ENCODE measurements at regions of chr3 and their contacts with region 1.

Region 1: GRCh38 chr3:139718415-139718814 is 40.6 kb upstream of the NMNAT3 start:
- DNase-seq: peak; percentile 57
- H3K4me3 Mint-ChIP-seq: no peak overlapping the region
- H3K27ac Mint-ChIP-seq: no peak overlapping the region
- H3K4me1 Mint-ChIP-seq: no peaks in the 10 kb centered on the region
- H3K27me3 Mint-ChIP-seq: peaks cover 80% of the 10 kb centered on the region
- CTCF ChIP-seq: peak; percentile 62

Region 2: DNA sequence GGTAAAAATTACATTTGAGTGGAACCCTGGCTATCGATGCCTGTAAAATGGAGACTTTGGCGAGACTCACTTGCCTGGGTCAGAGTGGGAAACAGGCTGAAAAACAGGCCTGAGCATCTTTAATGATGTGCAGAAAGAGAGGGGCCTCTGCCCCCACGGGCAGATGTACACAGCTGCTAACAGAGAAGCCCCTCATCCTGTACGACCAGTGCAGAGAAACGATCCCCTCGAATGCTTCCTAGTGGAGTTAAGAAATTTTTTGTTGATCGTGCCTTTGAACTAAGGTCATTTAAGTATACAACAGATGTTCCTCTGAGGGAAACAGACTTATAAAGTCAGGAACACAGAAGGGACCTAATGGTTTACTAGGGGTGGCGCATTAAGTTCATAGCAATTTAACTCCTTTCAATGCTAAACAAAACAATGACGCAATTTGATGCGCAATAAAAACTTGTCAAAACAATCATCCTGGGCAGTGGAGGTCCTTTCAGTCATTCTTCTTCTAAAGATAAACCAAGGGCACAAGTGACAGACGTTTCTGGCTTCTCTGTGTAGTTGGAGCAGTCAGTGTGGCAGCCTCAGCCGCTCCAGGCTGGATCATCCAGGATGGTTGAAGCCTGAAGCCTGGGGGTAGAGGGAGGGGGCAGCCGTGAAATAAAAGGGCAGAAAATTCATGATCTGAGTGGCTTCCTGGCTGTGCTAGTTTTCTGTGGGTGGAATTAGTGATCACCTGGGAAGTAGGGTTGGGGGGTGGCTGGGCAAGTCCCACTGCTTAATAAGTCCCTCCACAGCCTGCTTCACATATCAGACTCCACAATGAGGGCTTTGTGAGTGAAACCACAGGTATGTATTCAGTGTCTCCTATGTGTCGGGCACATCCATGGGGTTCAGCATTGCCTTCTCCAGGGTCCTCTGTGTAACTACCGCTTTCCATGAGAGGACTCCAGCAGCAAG is 425.4 kb before region 1 on chr3:
- CTCF ChIA-PET with region 1: no interaction called
- intact Hi-C with region 1: no loop called
- DNase-seq: peak; percentile 57
- H3K4me3 Mint-ChIP-seq: no peak overlapping the region
- H3K27ac Mint-ChIP-seq: peak overlapping the region; percentile 39
- H3K4me1 Mint-ChIP-seq: peaks cover 32% of the 10 kb centered on the region
- H3K27me3 Mint-ChIP-seq: no peaks in the 10 kb centered on the region
- CTCF ChIP-seq: no peak

Region 3: DNA sequence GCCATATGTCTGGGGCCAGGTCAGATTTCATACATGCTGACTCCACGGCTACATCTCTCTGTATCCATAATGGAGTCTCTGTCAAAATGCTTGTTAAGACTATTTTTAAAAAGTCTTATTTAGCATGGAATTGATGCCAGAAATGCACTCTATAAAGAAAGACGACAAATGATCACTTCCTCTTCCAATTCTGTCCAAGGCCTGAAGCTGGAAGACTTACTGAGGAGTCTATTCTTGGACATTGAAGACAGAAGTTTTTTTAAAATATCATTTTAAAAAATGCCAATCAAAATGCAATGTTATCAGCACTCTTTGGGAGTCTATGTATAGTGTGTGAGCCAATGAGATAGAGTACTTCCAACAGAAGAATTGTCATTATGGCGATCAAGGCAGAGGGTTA is 12.8 kb before region 1 on chr3:
- CTCF ChIA-PET with region 1: no interaction called
- intact Hi-C with region 1: no loop called
- DNase-seq: no peak
- H3K4me3 Mint-ChIP-seq: no peak overlapping the region
- H3K27ac Mint-ChIP-seq: no peak overlapping the region
- H3K4me1 Mint-ChIP-seq: peaks cover 6% of the 10 kb centered on the region
- H3K27me3 Mint-ChIP-seq: peaks cover 69% of the 10 kb centered on the region
- CTCF ChIP-seq: no peak

Region 4: GRCh38 chr3:139745831-139746230 is 27.4 kb after region 1 on chr3:
- CTCF ChIA-PET with region 1: no interaction called
- intact Hi-C with region 1: loop called (anchors 2 kb)
- DNase-seq: no peak
- H3K4me3 Mint-ChIP-seq: no peak overlapping the region
- H3K27ac Mint-ChIP-seq: no peak overlapping the region
- H3K4me1 Mint-ChIP-seq: no peaks in the 10 kb centered on the region
- H3K27me3 Mint-ChIP-seq: peaks cover 25% of the 10 kb centered on the region
- CTCF ChIP-seq: no peak

Measured in Calu3 (cell line).